Panc1 (cell line): ENCODE measurements at regions of chr2 and their contacts with region 1.

Region 1: DNA sequence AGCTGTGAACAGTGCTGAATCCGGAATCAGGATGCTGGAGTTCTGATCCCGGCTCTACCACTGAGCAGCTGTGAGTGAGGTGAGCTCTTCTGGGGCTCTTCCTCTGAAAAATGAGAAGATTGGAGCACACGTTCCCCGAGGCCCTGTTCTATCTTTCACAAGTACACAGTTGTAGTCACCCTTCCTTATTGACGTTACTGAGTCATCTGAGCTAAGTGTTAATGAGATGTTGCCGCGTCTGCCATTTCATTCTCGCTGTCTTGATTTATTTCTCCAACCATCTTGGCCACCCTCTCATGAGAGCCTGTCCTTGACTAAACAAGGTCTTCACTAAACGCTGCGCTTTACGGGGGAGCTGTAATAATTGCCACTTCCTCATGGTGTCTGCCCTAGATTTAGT is 31.9 kb upstream of the EFR3B start:
- DNase-seq: peak; percentile 35
- ATAC-seq: peak; percentile 76
- H3K4me3 ChIP-seq: peak overlapping the region in 1 of 2 experiments; percentile 27; a peak in 2 of 4 replicates
- H3K27ac ChIP-seq: peak overlapping the region; percentile 49; the same call in 1 of the 2 replicates
- H3K4me1 ChIP-seq: peaks cover 8% of the 10 kb centered on the region
- H3K27me3 ChIP-seq: no peaks in the 10 kb centered on the region
- CTCF ChIP-seq: no peak

Region 2: DNA sequence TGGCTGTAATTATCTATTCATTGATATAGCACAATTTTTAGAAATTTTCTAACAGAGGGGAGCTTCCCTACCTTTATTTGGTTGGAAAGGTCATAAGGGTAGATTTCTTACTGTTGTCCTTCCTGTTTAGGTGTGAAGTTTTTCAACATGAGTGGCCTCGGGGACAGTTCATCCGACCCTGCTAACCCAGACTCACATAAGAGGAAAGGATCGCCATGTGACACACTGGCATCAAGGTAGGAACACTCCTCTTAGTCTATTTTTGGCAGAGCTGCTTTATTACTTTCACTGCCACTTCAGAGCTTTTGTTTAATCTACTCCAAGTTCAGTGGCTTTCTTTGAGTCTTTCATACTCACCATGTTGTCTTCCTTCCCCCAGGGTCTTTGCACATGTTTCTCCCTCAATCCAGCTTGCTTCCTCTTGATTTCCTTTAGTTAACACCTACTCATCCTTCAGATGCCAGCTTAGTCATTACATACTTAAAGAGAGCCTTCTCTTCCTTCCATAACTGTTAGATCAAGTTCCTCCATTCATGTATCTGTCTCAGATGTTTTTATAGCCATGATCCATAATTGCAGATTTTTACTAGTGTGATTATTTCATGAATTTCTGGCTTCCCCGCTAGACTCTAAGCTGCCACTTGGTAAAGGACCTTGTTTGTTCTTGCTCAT is 351.3 kb before region 1 on chr2:
- CTCF ChIA-PET with region 1: no interaction called
- POLR2A ChIA-PET with region 1: interaction called, 10 read pairs
- in situ Hi-C with region 1: no loop called
- intact Hi-C with region 1: no loop called
- DNase-seq: no peak
- ATAC-seq: no peak
- H3K4me3 ChIP-seq: no peak overlapping the region
- H3K27ac ChIP-seq: no peak overlapping the region
- H3K4me1 ChIP-seq: no peaks in the 10 kb centered on the region
- H3K27me3 ChIP-seq: no peaks in the 10 kb centered on the region
- CTCF ChIP-seq: no peak